H1 (cell line): ENCODE measurements at regions of chr1 and their contacts with region 1.

Region 1: DNA sequence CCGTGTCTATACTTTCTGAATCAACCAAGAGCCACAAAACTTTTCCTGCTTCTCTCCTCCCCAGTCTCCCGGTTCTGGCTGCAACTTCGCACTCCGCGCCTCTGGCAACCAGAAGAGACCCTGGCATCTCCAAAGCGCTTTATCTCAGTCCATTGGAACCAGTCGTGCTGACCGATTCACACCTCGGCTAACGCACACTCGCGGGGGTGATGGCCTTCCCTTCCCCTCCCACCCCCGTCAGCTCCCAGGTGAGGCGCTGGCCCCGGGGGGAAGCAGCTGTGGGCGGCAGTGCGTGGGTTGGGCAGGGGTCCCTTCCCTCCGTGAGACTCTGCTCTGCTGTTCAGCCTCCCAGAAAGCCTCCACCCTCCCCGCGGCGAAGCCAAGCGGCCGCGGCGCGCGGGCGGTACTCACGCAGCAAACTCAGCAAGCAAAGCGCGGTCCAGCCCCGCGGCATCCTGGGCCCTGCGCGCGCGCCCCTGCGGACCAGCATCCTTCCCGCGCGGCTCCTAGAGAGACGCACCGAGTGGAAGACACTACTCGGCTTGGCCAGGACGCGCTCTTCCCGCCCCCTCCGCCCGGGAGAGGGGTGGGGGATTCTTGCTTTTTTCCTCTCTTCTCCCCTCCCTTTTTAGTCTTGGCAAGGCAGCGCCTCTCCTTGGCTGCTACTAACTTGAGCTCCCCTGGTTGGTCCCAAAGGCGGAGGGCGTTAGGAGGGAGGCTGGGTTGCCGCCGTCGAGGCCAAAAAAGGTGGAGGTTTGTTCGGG is at the start of gene CD34:
- DNase-seq: peak in 1 of 2 experiments; percentile 72
- H3K4me3 ChIP-seq: peak within 1 kb of the TSS; percentile 23 to 59 (median 26)
- H3K27ac ChIP-seq: no peak within 1 kb of the TSS
- H3K4me1 ChIP-seq: peaks cover 0 to 2% (median 0%) of the 10 kb centered on the region in 4 experiments; a peak in 1 of 7 replicates
- H3K27me3 ChIP-seq: peaks cover 11 to 42% (median 32%) of the 10 kb centered on the region in 4 experiments
- CTCF ChIP-seq: no peak
- EP300 ChIP-seq: no peak
- POLR2A ChIP-seq: no peak
- RAD21 ChIP-seq: no peak
- total RNA-seq, gene CD34: 0.39 and 0.46 TPM in 2 replicates

Region 2: GRCh38 chr1:207897188-207897587 is 13.6 kb before region 1 on chr1:
- CTCF ChIA-PET with region 1: interaction called, 25 read pairs
- POLR2A ChIA-PET with region 1: interaction called, 4 read pairs
- DNase-seq: no peak
- H3K4me3 ChIP-seq: no peak overlapping the region
- H3K27ac ChIP-seq: no peak overlapping the region
- H3K4me1 ChIP-seq: no peaks in the 10 kb centered on the region
- H3K27me3 ChIP-seq: 0 out of 7 replicates have a peak, but pooled peaks cover 0 to 2% (median 0%) of the 10 kb centered on the region in 4 experiments
- CTCF ChIP-seq: peak in 1 of 3 experiments; percentile 29; a peak in 1 of 4 replicates
- EP300 ChIP-seq: no peak
- POLR2A ChIP-seq: no peak
- RAD21 ChIP-seq: peak; percentile 39 to 51